Activated CD4-positive, alpha-beta T cell treated with anti-CD3 and anti-CD28 coated beads for 36 hours (primary cell): ENCODE measurements at regions of chr7 and their contacts with region 1.

Region 1: DNA sequence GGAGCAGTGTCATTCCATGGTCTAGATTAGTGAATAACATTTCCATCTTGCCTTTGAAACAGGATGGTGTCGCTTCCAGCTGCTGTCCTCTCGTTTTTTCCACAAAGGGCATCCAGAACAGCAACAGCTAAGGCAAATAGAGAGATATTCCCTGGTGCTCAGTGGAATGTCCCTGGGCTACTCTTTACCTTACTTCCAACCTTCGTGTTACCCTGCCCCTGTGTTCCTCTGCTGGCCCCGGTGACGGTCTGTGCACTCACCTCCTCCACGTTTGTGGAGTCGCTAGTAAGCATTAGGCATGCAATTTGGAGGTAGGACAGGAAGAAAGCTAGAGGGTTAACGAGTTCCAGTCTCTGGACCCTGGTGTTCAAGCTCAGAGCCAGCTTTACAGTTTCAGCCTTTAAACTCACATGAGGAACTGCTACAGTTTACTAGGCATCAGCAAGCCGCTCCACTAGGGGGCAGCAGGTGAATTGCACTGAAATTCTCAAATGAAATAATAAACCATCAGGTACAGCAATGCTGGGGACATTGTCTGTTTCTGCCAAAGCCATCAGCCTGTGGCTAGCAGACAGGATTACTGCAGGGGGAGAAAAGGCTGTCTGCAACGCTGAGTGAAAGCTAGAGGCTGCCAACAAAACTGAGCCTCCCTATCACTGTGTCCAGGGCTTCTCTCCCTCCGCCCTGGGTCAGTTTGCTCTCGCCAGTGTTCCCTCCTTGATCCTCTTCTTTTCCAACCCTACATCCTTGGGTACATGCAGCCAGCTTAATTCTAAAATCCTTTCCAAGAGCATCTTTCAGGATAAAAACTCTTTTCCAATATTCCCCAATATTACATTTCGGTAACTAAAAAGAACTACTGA is 9.0 kb downstream of the MRPL32 start:
- DNase-seq: peak; percentile 90
- ATAC-seq: peak; percentile 23
- H3K4me3 Mint-ChIP-seq: no peak overlapping the region
- H3K27ac Mint-ChIP-seq: no peak overlapping the region
- H3K4me1 Mint-ChIP-seq: peaks cover 42% of the 10 kb centered on the region
- H3K27me3 Mint-ChIP-seq: no peaks in the 10 kb centered on the region

Region 2: GRCh38 chr7:42574685-42575084 is 366.5 kb before region 1 on chr7:
- CTCF ChIA-PET with region 1: no interaction called
- POLR2A ChIA-PET with region 1: no interaction called
- intact Hi-C with region 1: no loop called
- DNase-seq: no peak
- ATAC-seq: no peak
- H3K4me3 Mint-ChIP-seq: no peak overlapping the region
- H3K27ac Mint-ChIP-seq: no peak overlapping the region
- H3K4me1 Mint-ChIP-seq: no peaks in the 10 kb centered on the region
- H3K27me3 Mint-ChIP-seq: no peaks in the 10 kb centered on the region

Region 3: GRCh38 chr7:43071604-43072003 is 130.4 kb after region 1 on chr7:
- CTCF ChIA-PET with region 1: interaction called, 3 read pairs
- POLR2A ChIA-PET with region 1: no interaction called
- intact Hi-C with region 1: loop called in 1 of 2 experiments (anchors 2 kb)
- DNase-seq: peak; percentile 63
- ATAC-seq: peak; percentile 36
- H3K4me3 Mint-ChIP-seq: no peak overlapping the region
- H3K27ac Mint-ChIP-seq: no peak overlapping the region
- H3K4me1 Mint-ChIP-seq: peaks cover 8% of the 10 kb centered on the region
- H3K27me3 Mint-ChIP-seq: peaks cover 20% of the 10 kb centered on the region

Region 4: GRCh38 chr7:43260980-43261878 is 320.0 kb after region 1 on chr7:
- CTCF ChIA-PET with region 1: interaction called, 7 read pairs
- POLR2A ChIA-PET with region 1: no interaction called
- intact Hi-C with region 1: loop called (anchors 1 kb)
- DNase-seq: peak; percentile 81
- ATAC-seq: peak; percentile 76
- H3K4me3 Mint-ChIP-seq: no peak overlapping the region
- H3K27ac Mint-ChIP-seq: no peak overlapping the region
- H3K4me1 Mint-ChIP-seq: no peaks in the 10 kb centered on the region
- H3K27me3 Mint-ChIP-seq: peaks cover 10% of the 10 kb centered on the region

Region 5: GRCh38 chr7:43353902-43354301 is 412.7 kb after region 1 on chr7:
- CTCF ChIA-PET with region 1: no interaction called
- POLR2A ChIA-PET with region 1: no interaction called
- intact Hi-C with region 1: loop called in 1 of 2 experiments (anchors 10 kb)
- DNase-seq: no peak
- ATAC-seq: no peak
- H3K4me3 Mint-ChIP-seq: no peak overlapping the region
- H3K27ac Mint-ChIP-seq: no peak overlapping the region
- H3K4me1 Mint-ChIP-seq: no peaks in the 10 kb centered on the region
- H3K27me3 Mint-ChIP-seq: peaks cover 50% of the 10 kb centered on the region

Region 6: GRCh38 chr7:43711503-43711902 is 770.3 kb after region 1 on chr7:
- CTCF ChIA-PET with region 1: no interaction called
- POLR2A ChIA-PET with region 1: no interaction called
- intact Hi-C with region 1: no loop called
- DNase-seq: no peak
- ATAC-seq: no peak
- H3K4me3 Mint-ChIP-seq: no peak overlapping the region
- H3K27ac Mint-ChIP-seq: no peak overlapping the region
- H3K4me1 Mint-ChIP-seq: peaks cover 15% of the 10 kb centered on the region
- H3K27me3 Mint-ChIP-seq: no peaks in the 10 kb centered on the region